ENCODE measurements at regions of chr12 and their contacts with region 1.

Region 1: GRCh38 chr12:15856097-15856982 is 25.8 kb upstream of the STRAP start:
- DNase-seq: peak; percentile 36
- H3K4me3 ChIP-seq: no peak overlapping the region
- H3K27ac ChIP-seq: no peak overlapping the region
- H3K4me1 ChIP-seq: peaks cover 0 to 10% (median 2%) of the 10 kb centered on the region in 4 donors
- H3K27me3 ChIP-seq: no peaks in the 10 kb centered on the region
- CTCF ChIP-seq: peak; percentile 78 to 94 (median 87)
- EP300 ChIP-seq: no peak
- POLR2A ChIP-seq: no peak

Region 2: DNA sequence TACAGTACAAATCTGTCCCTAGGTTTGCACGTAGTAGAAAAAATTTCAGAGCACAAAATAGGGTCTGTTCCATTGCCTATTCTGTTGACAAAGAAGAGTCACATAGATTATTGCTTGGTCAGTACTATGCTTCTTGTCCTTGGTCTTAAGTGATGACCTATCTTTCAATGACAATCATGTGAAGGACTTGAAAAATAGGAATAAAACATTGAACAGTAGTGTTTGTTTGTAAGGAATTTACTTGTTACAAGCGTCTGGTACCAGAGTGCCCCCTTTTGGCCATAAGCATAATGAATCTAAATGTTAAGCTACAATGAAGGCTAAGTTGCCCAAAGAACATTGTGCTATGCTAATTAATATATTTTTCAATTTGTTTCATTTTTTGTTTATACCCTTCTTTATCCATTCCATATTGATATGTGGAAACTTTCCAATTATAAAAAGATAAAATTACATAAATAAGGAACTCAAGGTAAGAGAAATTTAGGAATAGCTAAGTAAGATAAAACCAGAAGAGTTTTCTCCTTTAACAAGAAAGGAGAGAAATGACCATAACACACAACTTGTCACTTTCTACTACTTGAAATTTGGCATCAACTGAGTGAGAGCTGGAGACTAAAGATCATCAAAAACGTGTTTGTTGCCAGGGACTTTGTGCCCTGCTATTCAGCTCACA is 271.8 kb before region 1 on chr12:
- in situ Hi-C with region 1: loop called in 2 of 4 experiments (anchors 5 to 10 kb)
- intact Hi-C with region 1: no loop called
- DNase-seq: no peak
- H3K4me3 ChIP-seq: no peak overlapping the region
- H3K27ac ChIP-seq: no peak overlapping the region
- H3K4me1 ChIP-seq: peaks cover 0 to 25% (median 6%) of the 10 kb centered on the region in 4 donors
- H3K27me3 ChIP-seq: no peaks in the 10 kb centered on the region
- CTCF ChIP-seq: peak; percentile 61 to 72 (median 67)
- EP300 ChIP-seq: no peak
- POLR2A ChIP-seq: no peak

Region 3: DNA sequence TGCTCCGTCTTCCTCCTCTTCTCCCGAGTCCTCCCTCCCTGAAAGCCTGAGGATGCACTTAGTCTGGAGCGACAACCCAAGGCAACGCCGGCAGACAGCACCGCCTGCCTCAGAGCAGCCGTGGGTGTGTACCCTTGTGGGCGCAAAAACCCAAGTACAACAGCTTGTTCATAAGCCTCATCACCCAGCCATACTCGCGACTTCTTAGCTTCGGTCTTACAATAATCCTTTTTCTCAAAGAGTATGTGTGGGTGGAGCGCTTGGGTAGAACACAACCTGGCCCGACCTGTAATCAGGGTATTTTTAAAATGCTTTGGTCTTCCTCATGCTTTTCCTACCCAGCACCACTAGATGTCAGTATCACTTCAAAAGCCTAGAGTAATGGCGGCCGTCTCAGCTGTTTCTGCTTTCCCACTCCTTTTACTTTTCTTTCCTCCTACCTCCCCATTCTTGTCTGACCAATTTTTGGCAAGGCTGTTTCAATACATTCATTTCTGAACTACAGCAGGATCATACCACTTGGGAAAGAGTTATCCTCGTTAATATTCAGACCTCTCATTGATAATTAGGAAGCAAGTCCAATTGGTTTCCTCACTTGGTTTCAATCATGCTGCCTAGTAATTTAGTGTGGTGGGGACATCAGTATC is 266.0 kb before region 1 on chr12:
- in situ Hi-C with region 1: loop called (anchors 5 to 10 kb)
- intact Hi-C with region 1: loop called (anchors 2 kb)
- DNase-seq: peak; percentile 43
- H3K4me3 ChIP-seq: peak overlapping the region in 2 of 4 donors; percentile 21 to 41
- H3K27ac ChIP-seq: peak overlapping the region; percentile 30 to 66 (median 46)
- H3K4me1 ChIP-seq: peaks cover 0 to 14% (median 3%) of the 10 kb centered on the region in 4 donors
- H3K27me3 ChIP-seq: no peaks in the 10 kb centered on the region
- CTCF ChIP-seq: peak; percentile 84 to 96 (median 91)
- EP300 ChIP-seq: no peak
- POLR2A ChIP-seq: no peak

Region 4: DNA sequence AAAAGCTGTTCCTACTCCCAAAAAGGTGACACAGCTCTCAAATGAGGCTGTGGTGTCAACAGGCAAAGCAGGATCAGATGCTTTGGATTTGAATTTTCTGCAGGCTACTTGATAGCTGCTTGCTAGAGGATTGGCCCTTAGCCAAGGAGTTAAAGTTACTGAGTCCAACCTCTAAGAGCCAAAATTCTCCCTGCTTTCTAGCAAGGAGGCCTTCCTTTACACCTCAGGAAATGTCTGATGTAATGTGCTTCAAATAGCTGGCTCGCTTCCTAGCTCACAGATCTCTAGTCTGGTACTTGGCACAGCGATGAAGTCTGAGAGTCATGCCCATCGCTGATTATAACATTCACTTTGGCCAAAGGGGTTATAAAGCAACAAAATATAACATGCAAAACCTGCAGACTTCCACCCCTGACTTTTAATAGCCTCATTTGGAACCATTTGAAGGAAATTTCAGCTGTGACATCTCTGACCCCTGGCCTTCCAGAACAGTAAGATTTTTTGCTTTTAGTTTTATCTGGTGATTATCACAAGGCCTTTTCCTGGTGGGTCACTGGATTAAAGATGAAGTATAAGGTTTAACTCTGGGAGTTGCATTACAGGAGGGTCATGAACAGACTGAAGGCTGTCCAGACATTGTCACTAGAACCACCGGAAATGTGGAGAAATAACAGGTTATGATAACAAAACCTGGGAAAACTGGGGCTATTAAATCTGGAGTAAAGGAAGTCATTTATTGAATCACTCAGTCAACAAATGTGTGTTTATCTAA is 256.9 kb before region 1 on chr12:
- in situ Hi-C with region 1: loop called in 2 of 4 experiments (anchors 5 kb)
- intact Hi-C with region 1: no loop called
- DNase-seq: no peak
- H3K4me3 ChIP-seq: no peak overlapping the region
- H3K27ac ChIP-seq: peak overlapping the region in 1 of 4 donors; percentile 5
- H3K4me1 ChIP-seq: peaks cover 0 to 14% (median 5%) of the 10 kb centered on the region in 4 donors
- H3K27me3 ChIP-seq: no peaks in the 10 kb centered on the region
- CTCF ChIP-seq: no peak
- EP300 ChIP-seq: no peak
- POLR2A ChIP-seq: no peak

Measured in transverse colon (tissue), 4 donors.